Heart right ventricle (tissue), 16 donors: ENCODE measurements at regions of chr9 and their contacts with region 1.

Region 1: GRCh38 chr9:17986595-17986994 is 407.7 kb downstream of the SH3GL2 start:
- DNase-seq: no peak
- ATAC-seq: no peak
- H3K4me3 ChIP-seq: no peak overlapping the region
- H3K27ac ChIP-seq: no peak overlapping the region
- H3K4me1 ChIP-seq: no peaks in the 10 kb centered on the region
- H3K27me3 ChIP-seq: no peaks in the 10 kb centered on the region
- CTCF ChIP-seq: no peak

Region 2: GRCh38 chr9:17906176-17906840 is 80.3 kb before region 1 on chr9:
- intact Hi-C with region 1: loop called in 1 of 10 experiments (anchors 10 kb)
- DNase-seq: peak in 1 of 2 donors; percentile 18
- ATAC-seq: peak in 6 of 8 donors; percentile 27 to 61 (median 48)
- H3K4me3 ChIP-seq: peak overlapping the region in 9 of 10 donors; percentile 21 to 54 (median 41)
- H3K27ac ChIP-seq: no peak overlapping the region
- H3K4me1 ChIP-seq: peaks cover 0 to 17% (median 6%) of the 10 kb centered on the region in 9 donors
- H3K27me3 ChIP-seq: peaks cover 6 to 62% (median 45%) of the 10 kb centered on the region in 7 donors
- CTCF ChIP-seq: no peak